ENCODE measurements at regions of chr4 and their contacts with region 1.

Region 1: GRCh38 chr4:56424697-56425514 is 10.5 kb downstream of the PPAT start:
- DNase-seq: no peak
- H3K4me3 ChIP-seq: no peak overlapping the region
- H3K27ac ChIP-seq: no peak overlapping the region
- H3K4me1 ChIP-seq: no peaks in the 10 kb centered on the region
- H3K27me3 ChIP-seq: no peaks in the 10 kb centered on the region
- CTCF ChIP-seq: peak in 2 of 3 experiments; percentile 50 to 64

Region 2: DNA sequence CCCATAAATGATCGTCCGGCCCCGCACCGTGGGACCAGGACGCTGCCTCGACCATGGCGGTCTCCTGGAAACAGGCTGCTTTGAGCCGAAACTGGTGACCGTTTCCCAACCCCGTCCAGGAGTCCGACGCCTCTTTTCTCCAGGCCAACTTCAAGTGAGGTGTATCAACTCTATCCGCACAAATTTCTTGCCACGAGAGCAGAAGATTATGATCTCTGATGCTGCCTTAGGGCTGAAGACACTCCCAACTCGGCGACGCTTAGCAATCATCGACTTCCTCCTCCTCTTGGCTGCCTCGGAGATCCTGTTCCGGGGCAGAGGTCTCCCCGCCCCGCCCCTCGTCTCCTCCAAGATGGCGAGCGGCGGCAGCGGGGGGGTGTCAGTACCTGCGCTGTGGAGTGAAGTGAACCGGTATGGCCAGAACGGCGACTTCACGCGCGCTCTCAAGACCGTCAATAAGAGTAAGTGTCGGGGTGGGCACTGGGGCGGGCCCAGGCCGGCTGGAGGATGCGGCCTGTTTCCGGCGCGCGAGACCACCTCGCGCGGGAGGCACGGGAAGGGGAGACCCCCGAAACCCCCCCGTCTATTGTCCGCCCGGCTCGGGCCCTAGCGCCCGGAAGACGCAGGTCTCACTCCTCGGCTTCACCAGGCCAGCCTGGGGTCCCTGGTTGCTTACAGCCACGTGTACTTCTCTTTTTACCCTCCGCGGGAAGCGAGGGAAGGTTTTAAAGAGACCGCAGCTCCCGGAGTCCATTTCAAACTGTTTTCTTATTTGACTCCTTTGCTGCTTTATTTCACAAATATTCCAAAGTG is 42.6 kb after region 1 on chr4 and contains the start of gene SRP72:
- intact Hi-C with region 1: loop called (anchors 5 kb)
- DNase-seq: peak; percentile 66 to 94
- H3K4me3 ChIP-seq: peak within 1 kb of the TSS; percentile 93 to 96
- H3K27ac ChIP-seq: peak within 1 kb of the TSS; percentile 84 to 93
- H3K4me1 ChIP-seq: peaks cover 8 to 22% of the 10 kb centered on the region in 2 donors
- H3K27me3 ChIP-seq: no peaks in the 10 kb centered on the region
- CTCF ChIP-seq: no peak
- total RNA-seq, gene SRP72: 89.4 TPM

Region 3: DNA sequence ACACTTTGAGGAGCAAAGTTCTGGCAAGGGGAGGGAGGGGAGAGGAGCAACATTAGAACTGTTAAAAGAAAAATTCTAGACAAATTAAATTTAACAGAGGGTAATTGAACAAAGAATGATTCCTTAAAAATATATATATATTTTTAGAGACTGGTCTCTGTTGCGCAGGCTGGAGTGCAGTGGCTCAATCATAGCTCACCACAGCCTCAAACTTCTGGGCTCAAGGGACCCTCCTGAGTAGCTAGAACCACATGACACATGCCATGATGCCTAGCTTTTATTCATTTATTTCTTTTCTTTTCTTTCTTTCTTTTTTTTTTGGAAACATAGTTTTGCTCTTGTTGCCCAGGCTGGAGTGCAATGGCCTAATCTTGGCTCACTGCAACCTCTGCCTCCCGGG is 415.7 kb after region 1 on chr4:
- intact Hi-C with region 1: loop called (anchors 2 kb)
- DNase-seq: no peak
- H3K4me3 ChIP-seq: no peak overlapping the region
- H3K27ac ChIP-seq: no peak overlapping the region
- H3K4me1 ChIP-seq: no peaks in the 10 kb centered on the region
- H3K27me3 ChIP-seq: no peaks in the 10 kb centered on the region
- CTCF ChIP-seq: no peak

Measured in ascending aorta (tissue), 2 donors.